Activated CD8-positive, alpha-beta memory T cell treated with anti-CD3 and anti-CD28 coated beads, Interleukin-2, amount 10 ng/mL, durations not matched to agents 7 days and 5 days (primary cell): ENCODE measurements at regions of chr15 and their contacts with region 1.

Region 1: DNA sequence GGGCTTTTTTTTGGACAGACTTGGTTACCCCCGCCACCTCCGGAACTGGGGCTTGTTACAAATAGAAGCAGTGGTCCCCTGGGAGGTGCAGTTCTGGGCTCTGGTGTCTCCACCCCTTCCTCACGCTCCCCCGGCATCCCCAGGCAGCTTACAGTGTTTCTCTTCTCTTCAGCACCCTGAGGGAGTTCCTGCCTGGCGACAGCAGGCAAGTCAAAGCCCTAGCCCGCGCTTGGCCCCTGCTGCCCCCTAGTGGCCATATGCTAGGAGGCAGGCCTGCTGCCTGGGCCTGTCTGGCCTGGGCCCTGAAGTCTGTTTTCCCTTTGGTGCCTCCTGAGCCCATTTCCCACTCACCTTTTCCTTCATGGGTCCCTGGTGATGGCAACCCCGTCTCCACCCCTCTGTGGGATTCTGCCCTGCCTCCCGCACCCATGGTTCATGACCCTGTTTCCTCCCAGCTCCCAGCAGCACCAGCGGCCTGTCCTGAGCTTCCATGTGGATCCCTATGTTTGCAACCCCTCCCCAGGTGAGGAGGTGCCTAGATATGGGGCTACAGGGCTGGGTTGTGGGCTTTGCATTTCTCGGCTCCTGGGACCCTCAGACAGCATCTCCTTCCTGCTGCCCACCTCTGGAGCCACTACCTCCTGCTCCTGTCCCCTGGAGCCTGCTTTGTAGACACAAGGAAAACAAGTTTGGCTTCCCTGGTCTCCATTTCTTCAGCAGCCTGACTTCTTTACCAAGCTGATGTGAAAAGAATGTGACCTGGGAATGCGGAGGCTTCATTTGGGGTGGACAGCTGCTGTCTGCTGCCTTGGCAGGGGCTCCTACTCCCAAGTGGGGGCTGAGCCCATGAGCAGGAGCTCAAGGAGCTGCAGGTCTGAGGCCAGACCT is 2.2 kb downstream of the SNX22 start:
- DNase-seq: peak; percentile 95
- ATAC-seq: peak; percentile 86
- H3K4me3 Mint-ChIP-seq: peak overlapping the region; percentile 54
- H3K27ac Mint-ChIP-seq: peak overlapping the region; percentile 76
- H3K4me1 Mint-ChIP-seq: peaks cover 35% of the 10 kb centered on the region
- H3K27me3 Mint-ChIP-seq: peaks cover 11% of the 10 kb centered on the region

Region 2: DNA sequence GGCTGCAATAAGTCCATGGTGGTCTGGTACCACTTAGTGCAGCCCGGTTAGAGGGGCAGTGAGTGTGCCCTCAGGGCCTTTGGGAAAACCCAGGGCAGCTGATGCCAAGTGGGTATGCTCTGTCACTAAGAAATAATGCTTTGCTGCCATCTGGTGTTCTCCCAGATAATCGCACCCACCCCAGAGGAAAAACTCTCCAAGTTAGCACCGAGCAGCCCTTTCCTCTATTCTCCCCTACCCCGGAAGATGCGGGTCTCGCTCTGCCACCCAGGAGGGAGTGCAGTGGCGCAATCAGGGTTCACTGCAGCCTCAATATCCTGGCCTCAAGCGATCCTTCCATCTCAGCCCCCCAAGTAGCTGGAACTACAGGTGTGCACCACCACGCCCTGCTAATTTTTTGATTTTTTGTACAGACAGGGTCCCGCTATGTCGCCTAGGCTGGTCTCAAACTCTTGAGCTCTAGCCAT is 86.1 kb before region 1 on chr15:
- CTCF ChIA-PET with region 1: interaction called, 14 read pairs
- DNase-seq: peak; percentile 79
- ATAC-seq: peak; percentile 87
- H3K4me3 Mint-ChIP-seq: no peak overlapping the region
- H3K27ac Mint-ChIP-seq: peak overlapping the region; percentile 57
- H3K4me1 Mint-ChIP-seq: peaks cover 23% of the 10 kb centered on the region
- H3K27me3 Mint-ChIP-seq: no peaks in the 10 kb centered on the region

Region 3: GRCh38 chr15:64093627-64094417 is 59.9 kb before region 1 on chr15 and contains the start of gene CIAO2A:
- CTCF ChIA-PET with region 1: interaction called, 19 read pairs
- DNase-seq: peak; percentile 99
- ATAC-seq: peak; percentile 81
- H3K4me3 Mint-ChIP-seq: peak within 1 kb of the TSS; percentile 99
- H3K27ac Mint-ChIP-seq: peak within 1 kb of the TSS; percentile 98
- H3K4me1 Mint-ChIP-seq: peaks cover 66% of the 10 kb centered on the region
- H3K27me3 Mint-ChIP-seq: no peaks in the 10 kb centered on the region
- total RNA-seq, gene CIAO2A: 66.4 to 80.2 TPM

Region 4: GRCh38 chr15:64099379-64099778 is 54.3 kb before region 1 on chr15:
- CTCF ChIA-PET with region 1: interaction called, 15 read pairs
- DNase-seq: no peak
- ATAC-seq: no peak
- H3K4me3 Mint-ChIP-seq: no peak overlapping the region
- H3K27ac Mint-ChIP-seq: no peak overlapping the region
- H3K4me1 Mint-ChIP-seq: peaks cover 39% of the 10 kb centered on the region
- H3K27me3 Mint-ChIP-seq: no peaks in the 10 kb centered on the region

Region 5: DNA sequence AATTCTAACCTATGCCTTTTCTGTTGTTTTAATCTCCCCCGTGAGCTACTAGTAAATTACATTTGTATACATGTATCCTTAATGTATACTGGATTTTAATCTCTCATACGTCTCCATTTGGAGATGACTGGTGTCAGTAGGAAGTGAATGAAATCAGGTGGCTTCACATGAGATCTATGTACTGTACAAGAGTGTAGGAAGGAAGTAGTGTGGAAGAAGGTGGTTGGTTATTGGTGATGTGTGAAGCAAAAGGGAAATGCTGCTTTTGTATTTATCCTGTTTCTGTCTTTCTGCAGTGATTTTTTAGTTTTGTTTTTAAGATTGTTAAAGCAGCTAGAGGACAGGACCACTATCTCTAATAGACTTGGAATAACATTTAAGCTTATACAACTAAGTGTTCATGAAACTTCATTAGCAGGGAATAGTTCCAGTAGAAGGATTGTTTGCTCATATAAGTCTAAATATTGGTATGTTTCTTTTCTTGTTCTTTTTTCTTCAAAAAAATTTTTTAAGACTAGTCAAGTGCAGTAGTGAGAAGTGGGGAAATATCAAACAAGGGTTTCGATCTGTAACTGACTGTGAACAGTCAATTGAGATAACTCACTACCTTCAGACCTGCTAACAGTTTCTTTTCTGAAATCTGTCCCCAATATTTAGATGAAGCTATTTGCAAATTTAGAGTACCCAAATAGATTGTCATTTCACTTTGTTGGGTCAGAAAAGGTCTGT is 42.6 kb before region 1 on chr15:
- CTCF ChIA-PET with region 1: interaction called, 10 read pairs
- DNase-seq: no peak
- ATAC-seq: peak; percentile 86
- H3K4me3 Mint-ChIP-seq: no peak overlapping the region
- H3K27ac Mint-ChIP-seq: peak overlapping the region; percentile 64
- H3K4me1 Mint-ChIP-seq: peaks cover 30% of the 10 kb centered on the region
- H3K27me3 Mint-ChIP-seq: no peaks in the 10 kb centered on the region

Region 6: GRCh38 chr15:64131547-64131946 is 22.2 kb before region 1 on chr15:
- CTCF ChIA-PET with region 1: interaction called, 13 read pairs
- DNase-seq: no peak
- ATAC-seq: no peak
- H3K4me3 Mint-ChIP-seq: no peak overlapping the region
- H3K27ac Mint-ChIP-seq: no peak overlapping the region
- H3K4me1 Mint-ChIP-seq: peaks cover 2% of the 10 kb centered on the region
- H3K27me3 Mint-ChIP-seq: no peaks in the 10 kb centered on the region